HepG2 (cell line): ENCODE measurements at regions of chr5 and their contacts with region 1.

Region 1: DNA sequence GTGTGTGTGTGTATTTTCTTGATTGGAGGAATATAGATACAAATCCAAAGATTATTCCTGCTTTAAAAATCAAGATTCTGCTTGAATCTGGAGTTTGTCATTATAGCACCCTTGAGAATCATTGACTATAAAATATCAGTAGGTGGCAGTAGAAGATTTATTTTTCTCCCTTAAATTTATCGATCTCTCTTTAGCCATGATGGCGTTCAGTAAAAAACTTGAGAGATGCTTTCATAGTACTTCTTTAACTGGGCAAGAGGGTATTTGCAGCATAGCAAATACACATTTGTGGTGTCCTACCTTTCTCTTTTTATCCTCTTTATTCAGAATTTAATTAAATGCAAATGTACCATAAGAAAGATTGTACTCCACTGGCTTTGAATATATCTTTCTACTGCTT is 307.7 kb downstream of the ADGRV1 start:
- DNase-seq: peak; percentile 40
- ATAC-seq: peak; percentile 74
- H3K4me3 ChIP-seq: peak overlapping the region in 1 of 3 experiments; percentile 4; a peak in 1 of 6 replicates
- H3K27ac ChIP-seq: no peak overlapping the region
- H3K4me1 ChIP-seq: peaks cover 23% of the 10 kb centered on the region
- H3K27me3 ChIP-seq: no peaks in the 10 kb centered on the region
- CTCF ChIP-seq: peak; percentile 72
- EP300 ChIP-seq: peak in 1 of 2 experiments; percentile 28; a peak in 1 of 4 replicates
- POLR2A ChIP-seq: no peak
- RAD21 ChIP-seq: peak; percentile 80

Region 2: DNA sequence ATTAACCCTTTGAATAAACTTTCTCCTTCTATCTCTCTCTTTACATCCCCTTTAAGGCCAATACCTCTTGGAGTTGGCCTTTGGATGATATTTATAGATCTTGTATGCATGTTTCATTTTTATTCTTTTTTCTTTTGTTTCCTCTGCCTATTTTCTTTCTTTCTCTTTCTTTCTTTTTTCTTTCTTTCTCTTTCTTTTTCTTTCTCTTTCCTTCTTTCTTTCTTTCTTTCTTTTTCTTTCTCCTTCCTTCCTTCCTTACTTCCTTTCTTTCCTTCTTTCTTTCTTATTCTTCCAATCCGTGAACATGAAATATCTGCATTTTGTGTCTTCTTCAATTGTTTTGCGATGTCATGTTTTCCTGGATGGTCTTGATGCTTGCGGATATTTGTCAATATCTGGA is 31.6 kb before region 1 on chr5:
- CTCF ChIA-PET with region 1: no interaction called
- POLR2A ChIA-PET with region 1: no interaction called
- in situ Hi-C with region 1: no loop called
- intact Hi-C with region 1: no loop called
- DNase-seq: no peak
- ATAC-seq: no peak
- H3K4me3 ChIP-seq: no peak overlapping the region
- H3K27ac ChIP-seq: no peak overlapping the region
- H3K4me1 ChIP-seq: no peaks in the 10 kb centered on the region
- H3K27me3 ChIP-seq: no peaks in the 10 kb centered on the region
- CTCF ChIP-seq: no peak
- EP300 ChIP-seq: no peak
- POLR2A ChIP-seq: no peak
- RAD21 ChIP-seq: no peak

Region 3: DNA sequence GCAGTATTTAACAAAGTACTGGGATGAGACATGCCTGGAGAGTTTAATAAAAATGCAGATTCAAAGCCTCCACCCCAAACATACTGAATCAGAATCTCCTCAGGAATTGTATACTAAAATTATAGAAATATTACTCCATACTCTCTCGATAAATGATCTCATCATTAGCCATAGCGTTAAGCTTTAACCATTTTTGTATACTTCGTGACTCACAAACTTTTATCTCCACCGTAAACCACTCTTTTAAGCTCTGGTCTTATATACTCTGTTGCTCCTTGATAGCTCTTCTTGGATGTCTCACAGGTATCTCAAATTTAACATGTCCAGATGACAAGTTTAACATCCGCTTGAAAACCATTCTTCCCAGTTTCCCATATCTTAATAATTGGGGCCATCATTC is 20.0 kb after region 1 on chr5:
- CTCF ChIA-PET with region 1: no interaction called
- POLR2A ChIA-PET with region 1: no interaction called
- in situ Hi-C with region 1: no loop called
- intact Hi-C with region 1: no loop called
- DNase-seq: no peak
- ATAC-seq: no peak
- H3K4me3 ChIP-seq: no peak overlapping the region
- H3K27ac ChIP-seq: no peak overlapping the region
- H3K4me1 ChIP-seq: peaks cover 30% of the 10 kb centered on the region
- H3K27me3 ChIP-seq: no peaks in the 10 kb centered on the region
- CTCF ChIP-seq: no peak
- EP300 ChIP-seq: no peak
- POLR2A ChIP-seq: no peak
- RAD21 ChIP-seq: no peak

Region 4: DNA sequence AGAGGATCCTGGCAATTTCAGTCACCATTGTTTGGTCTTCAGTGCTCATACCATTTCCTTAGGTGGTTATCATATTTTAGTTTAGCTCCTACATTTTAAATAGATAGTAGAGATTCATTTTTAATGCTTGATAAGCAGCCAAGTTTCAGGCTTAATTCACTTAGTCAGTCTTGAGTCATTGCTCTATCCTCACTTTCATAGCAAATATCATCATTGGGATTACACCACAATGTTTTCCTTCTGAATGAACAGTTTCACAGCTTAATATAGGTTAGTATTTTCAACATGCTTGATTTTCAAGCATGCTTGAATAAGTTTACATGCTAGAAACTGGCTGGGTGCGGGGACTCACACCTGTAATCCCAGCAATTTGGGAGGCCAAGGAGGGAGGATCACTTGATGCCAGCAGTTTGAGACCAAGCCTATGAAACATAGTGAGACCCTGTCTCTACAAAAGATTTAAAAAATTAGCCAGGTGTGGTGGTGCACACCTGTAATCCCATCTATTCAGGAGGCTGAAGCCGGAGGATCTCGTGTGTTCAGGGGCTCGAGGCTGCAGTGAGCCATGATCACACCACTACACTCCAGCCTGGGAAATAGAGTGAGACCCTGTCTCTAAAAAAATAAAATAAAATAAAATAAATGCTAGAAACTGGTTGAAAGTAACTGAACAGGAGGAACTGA is 32.1 kb after region 1 on chr5:
- CTCF ChIA-PET with region 1: no interaction called
- POLR2A ChIA-PET with region 1: no interaction called
- in situ Hi-C with region 1: no loop called
- intact Hi-C with region 1: loop called (anchors 1 kb)
- DNase-seq: no peak
- ATAC-seq: no peak
- H3K4me3 ChIP-seq: peak overlapping the region in 2 of 3 experiments; percentile 21 to 31; a peak in 3 of 6 replicates
- H3K27ac ChIP-seq: peak overlapping the region; percentile 82
- H3K4me1 ChIP-seq: peaks cover 65% of the 10 kb centered on the region
- H3K27me3 ChIP-seq: no peaks in the 10 kb centered on the region
- CTCF ChIP-seq: no peak
- EP300 ChIP-seq: no peak
- POLR2A ChIP-seq: no peak
- RAD21 ChIP-seq: no peak

Region 5: DNA sequence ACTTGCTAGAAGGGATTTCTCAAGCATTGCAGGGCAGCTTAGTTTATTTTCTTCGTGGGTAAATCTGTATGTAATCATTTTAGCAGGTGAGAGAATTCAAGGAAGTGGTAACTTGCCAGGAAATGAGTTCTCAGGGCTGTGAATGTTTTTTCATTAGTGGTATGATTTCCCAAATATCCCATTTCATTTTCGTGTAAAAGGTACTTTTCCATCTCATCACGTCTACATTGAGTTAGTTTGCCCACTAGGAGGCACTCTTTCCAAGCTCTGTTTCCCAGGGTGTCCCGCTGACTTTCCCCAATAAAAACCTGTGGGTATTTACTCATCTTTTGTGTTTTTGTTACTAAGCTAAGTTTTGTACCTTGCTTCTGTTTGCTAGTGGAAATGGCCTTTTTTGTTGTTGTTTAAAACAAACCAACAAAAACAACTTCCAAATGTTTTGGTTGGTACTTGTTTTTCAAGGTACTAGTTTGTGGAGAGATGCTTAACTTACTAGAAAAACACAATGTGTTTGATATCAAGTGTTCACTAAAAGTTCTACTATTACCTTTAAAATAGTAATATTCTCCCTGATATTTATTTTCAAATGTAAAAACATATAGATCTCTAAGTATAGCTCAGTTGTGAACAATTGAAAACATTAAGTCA is 65.8 kb after region 1 on chr5:
- CTCF ChIA-PET with region 1: interaction called, 9 read pairs
- POLR2A ChIA-PET with region 1: no interaction called
- in situ Hi-C with region 1: no loop called
- intact Hi-C with region 1: loop called (anchors 1 kb)
- DNase-seq: peak; percentile 48
- ATAC-seq: peak; percentile 67
- H3K4me3 ChIP-seq: no peak overlapping the region
- H3K27ac ChIP-seq: no peak overlapping the region
- H3K4me1 ChIP-seq: peaks cover 45% of the 10 kb centered on the region
- H3K27me3 ChIP-seq: no peaks in the 10 kb centered on the region
- CTCF ChIP-seq: peak; percentile 80
- EP300 ChIP-seq: peak in 1 of 2 experiments; percentile 28; a peak in 1 of 4 replicates
- POLR2A ChIP-seq: no peak
- RAD21 ChIP-seq: peak; percentile 86

Region 6: GRCh38 chr5:91101600-91102379 is 235.5 kb after region 1 on chr5:
- CTCF ChIA-PET with region 1: interaction called, 11 read pairs
- POLR2A ChIA-PET with region 1: no interaction called
- in situ Hi-C with region 1: loop called (anchors 10 kb)
- intact Hi-C with region 1: loop called (anchors 1 kb)
- DNase-seq: peak; percentile 64
- ATAC-seq: peak; percentile 99
- H3K4me3 ChIP-seq: no peak overlapping the region
- H3K27ac ChIP-seq: no peak overlapping the region
- H3K4me1 ChIP-seq: peaks cover 11% of the 10 kb centered on the region
- H3K27me3 ChIP-seq: no peaks in the 10 kb centered on the region
- CTCF ChIP-seq: peak; percentile 85
- EP300 ChIP-seq: no peak
- POLR2A ChIP-seq: no peak
- RAD21 ChIP-seq: peak; percentile 87

Region 7: DNA sequence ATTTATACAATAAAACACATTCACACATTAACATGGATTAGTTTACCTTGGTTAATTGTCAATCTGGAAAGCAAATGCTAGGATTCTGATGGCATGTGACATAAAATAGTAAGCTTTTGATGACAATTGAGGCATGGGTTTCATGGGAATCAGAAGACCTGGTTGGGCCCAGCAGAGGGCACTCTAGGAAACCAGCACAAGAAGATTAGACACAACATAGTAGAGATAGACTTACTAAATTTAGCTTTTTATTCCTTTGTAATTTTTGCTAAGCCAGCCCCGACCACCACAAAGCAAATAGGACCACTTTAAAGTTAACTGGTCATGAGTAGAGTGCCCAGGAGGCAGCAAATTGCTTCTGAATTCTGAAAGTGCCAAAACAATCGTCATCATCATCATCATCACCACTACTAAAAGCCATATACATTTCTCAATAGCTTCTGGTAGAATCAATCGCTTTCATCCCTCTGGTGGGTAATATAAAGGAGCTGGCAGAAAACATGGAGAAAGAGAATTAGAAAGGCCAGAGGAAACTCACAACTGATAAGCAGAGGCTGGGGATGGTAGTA is 353.6 kb after region 1 on chr5:
- CTCF ChIA-PET with region 1: no interaction called
- POLR2A ChIA-PET with region 1: no interaction called
- in situ Hi-C with region 1: loop called (anchors 25 kb)
- intact Hi-C with region 1: no loop called
- DNase-seq: no peak
- ATAC-seq: peak; percentile 53
- H3K4me3 ChIP-seq: no peak overlapping the region
- H3K27ac ChIP-seq: no peak overlapping the region
- H3K4me1 ChIP-seq: no peaks in the 10 kb centered on the region; the same call in 1 of the 2 replicates
- H3K27me3 ChIP-seq: no peaks in the 10 kb centered on the region
- CTCF ChIP-seq: peak; percentile 33; the same call in 1 of the 2 replicates
- EP300 ChIP-seq: no peak
- POLR2A ChIP-seq: no peak
- RAD21 ChIP-seq: no peak

Region 8: DNA sequence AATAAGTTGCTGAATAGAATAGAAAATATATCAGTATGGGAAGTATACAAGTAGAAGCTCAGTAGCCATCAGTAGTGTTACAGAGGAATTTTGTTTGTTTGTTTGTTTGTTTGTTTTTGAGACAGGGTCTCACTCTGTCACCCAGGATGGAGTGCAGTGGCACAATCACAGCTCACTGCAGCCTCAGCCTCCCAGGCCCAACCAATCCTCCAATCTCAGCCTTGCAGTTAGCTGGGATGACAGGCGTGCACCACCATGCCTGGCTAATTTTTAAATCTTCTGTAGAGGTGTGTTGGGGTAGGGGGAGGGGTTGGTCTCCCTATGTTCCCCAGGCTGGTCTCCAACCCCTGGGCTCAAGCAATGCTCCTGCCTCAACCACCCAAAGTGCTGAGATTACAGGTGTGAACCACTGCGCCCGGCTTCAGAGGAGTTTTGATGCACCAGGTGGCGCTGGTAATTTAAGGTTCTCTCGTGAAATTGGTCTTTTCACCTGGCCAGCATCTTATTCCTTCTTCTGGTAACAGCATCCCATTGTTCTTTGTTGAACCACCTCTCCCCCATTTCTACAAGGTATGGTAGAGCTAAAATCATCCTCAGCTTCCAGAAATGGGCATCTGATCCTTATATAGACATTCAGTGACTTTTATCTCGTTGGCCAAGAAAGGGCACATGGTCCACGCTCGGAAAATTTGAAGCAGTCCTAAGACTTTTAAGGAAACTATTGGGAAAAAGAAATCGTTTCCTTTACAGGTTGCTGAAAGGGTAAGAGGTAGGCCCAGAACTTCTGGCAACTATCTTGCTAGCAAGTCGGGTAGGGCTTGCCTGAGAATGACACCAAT is 359.7 kb after region 1 on chr5:
- CTCF ChIA-PET with region 1: no interaction called
- POLR2A ChIA-PET with region 1: no interaction called
- in situ Hi-C with region 1: loop called (anchors 25 kb)
- intact Hi-C with region 1: loop called (anchors 2 kb)
- DNase-seq: peak; percentile 24
- ATAC-seq: peak; percentile 72
- H3K4me3 ChIP-seq: no peak overlapping the region
- H3K27ac ChIP-seq: no peak overlapping the region
- H3K4me1 ChIP-seq: no peaks in the 10 kb centered on the region; the same call in 1 of the 2 replicates
- H3K27me3 ChIP-seq: no peaks in the 10 kb centered on the region
- CTCF ChIP-seq: peak; percentile 77
- EP300 ChIP-seq: no peak
- POLR2A ChIP-seq: no peak
- RAD21 ChIP-seq: peak; percentile 79